ENCODE measurements at regions of chr19 and their contacts with region 1.

Region 1: GRCh38 chr19:2699413-2700140 is 2.9 kb downstream of the GNG7 start:
- DNase-seq: no peak
- H3K4me3 ChIP-seq: no peak overlapping the region
- H3K27ac ChIP-seq: no peak overlapping the region
- H3K4me1 ChIP-seq: no peaks in the 10 kb centered on the region
- H3K27me3 ChIP-seq: peaks cover 13% of the 10 kb centered on the region
- CTCF ChIP-seq: no peak

Region 2: GRCh38 chr19:2540646-2541454 is 158.7 kb before region 1 on chr19:
- CTCF ChIA-PET with region 1: no interaction called
- dilution Hi-C with region 1: no loop called
- in situ Hi-C with region 1: no loop called
- intact Hi-C with region 1: no loop called
- DNase-seq: peak; percentile 94
- H3K4me3 ChIP-seq: peak overlapping the region in 2 of 3 experiments; percentile 2 to 21
- H3K27ac ChIP-seq: peak overlapping the region; percentile 84
- H3K4me1 ChIP-seq: peaks cover 36% of the 10 kb centered on the region
- H3K27me3 ChIP-seq: no peaks in the 10 kb centered on the region
- CTCF ChIP-seq: peak; percentile 6 to 45

Region 3: DNA sequence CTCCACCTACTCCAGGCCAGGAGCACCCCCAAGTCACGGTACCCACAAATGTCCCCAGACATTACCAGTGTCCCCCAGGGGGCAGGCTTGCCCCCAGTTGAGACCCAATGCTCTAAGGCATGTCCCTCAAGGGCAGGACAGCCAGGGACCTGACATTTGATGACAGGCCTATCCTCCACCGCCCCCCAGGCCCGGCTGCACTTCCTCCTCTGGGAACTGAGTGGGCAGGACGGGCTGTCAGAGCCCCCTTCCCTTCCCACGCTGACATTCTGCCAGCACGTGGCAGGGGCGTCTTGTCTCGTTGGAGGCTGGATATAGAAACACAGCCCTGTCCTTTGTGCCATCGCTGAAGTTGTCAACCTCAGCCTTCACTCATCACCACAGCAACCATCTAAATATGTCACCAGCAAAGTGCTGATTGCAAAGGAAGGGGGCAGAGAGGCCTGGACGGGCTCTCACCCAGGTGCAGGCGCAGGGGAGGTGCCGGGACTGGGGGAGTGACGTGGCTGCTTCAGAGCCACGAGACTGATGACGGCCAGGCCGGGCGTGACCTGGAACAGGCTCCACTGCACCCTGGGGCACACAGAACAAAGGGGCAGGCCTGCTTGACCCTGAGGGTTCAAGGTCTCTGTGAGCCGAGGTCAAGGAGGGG is 35.5 kb before region 1 on chr19:
- CTCF ChIA-PET with region 1: no interaction called
- dilution Hi-C with region 1: loop called (anchors 5 kb)
- in situ Hi-C with region 1: no loop called
- intact Hi-C with region 1: no loop called
- DNase-seq: no peak
- H3K4me3 ChIP-seq: no peak overlapping the region
- H3K27ac ChIP-seq: no peak overlapping the region
- H3K4me1 ChIP-seq: no peaks in the 10 kb centered on the region
- H3K27me3 ChIP-seq: no peaks in the 10 kb centered on the region
- CTCF ChIP-seq: no peak

Region 4: DNA sequence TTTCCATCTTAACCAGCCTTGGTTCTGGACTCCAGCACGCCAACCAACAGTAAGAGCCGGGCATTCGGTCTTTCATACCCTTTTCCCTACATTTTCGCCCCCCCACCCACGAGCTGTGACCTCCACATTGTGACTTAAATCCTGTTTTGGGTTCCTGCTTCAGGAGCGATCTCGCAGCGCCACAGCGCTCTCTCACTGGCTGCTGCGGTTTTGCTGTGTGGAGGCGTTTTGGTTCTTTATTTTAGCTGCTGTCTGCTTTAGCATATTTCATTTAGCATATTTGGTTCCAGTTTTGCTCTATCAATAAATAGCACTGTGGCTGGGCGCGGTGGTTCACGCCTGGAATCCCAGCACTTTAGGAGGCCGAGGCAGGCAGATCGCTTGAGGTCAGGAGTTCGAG is 59.8 kb after region 1 on chr19:
- CTCF ChIA-PET with region 1: no interaction called
- dilution Hi-C with region 1: loop called (anchors 5 kb)
- in situ Hi-C with region 1: no loop called
- intact Hi-C with region 1: no loop called
- DNase-seq: no peak
- H3K4me3 ChIP-seq: no peak overlapping the region
- H3K27ac ChIP-seq: no peak overlapping the region
- H3K4me1 ChIP-seq: no peaks in the 10 kb centered on the region
- H3K27me3 ChIP-seq: no peaks in the 10 kb centered on the region
- CTCF ChIP-seq: no peak